Activated naive CD4-positive, alpha-beta T cell treated with anti-CD3 and anti-CD28 coated beads for 36 hours (primary cell): ENCODE measurements at regions of chr6 and their contacts with region 1.

Region 1: GRCh38 chr6:160930547-160931377 is 60.8 kb upstream of the MAP3K4 start:
- DNase-seq: peak; percentile 60
- H3K4me3 Mint-ChIP-seq: no peak overlapping the region
- H3K27ac Mint-ChIP-seq: no peak overlapping the region
- H3K4me1 Mint-ChIP-seq: peaks cover 3% of the 10 kb centered on the region
- H3K27me3 Mint-ChIP-seq: peaks cover 33% of the 10 kb centered on the region

Region 2: DNA sequence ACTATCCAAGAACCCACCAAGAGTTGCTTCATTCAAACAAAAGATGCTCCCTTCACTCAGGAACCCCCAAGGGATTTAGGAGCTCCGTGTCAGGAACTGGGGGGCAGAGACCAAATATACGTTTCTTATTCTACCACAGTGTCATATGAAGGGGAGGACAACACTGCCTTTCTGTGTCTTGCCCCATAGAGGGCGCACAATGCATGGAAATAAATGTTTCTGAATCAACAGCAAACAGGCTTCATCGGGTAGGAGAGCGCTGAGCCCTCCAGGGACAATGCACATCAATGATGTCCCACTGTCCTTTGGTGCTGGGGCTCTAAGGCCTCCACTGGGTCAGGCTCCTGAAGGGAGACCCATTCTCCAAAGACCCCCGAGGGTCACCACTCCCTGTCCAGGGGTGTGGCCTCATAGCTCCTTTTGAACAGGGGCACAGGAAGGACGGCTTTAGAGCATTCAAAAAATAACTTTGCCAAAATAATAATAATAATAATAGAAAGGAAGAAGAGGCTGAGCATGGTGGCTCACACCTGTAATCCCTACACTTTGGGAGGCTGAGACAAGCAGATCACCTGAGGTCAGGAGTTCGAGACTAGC is 197.6 kb before region 1 on chr6:
- CTCF ChIA-PET with region 1: no interaction called
- intact Hi-C with region 1: loop called (anchors 10 kb)
- DNase-seq: peak; percentile 56
- H3K4me3 Mint-ChIP-seq: no peak overlapping the region
- H3K27ac Mint-ChIP-seq: no peak overlapping the region
- H3K4me1 Mint-ChIP-seq: no peaks in the 10 kb centered on the region
- H3K27me3 Mint-ChIP-seq: peaks cover 15% of the 10 kb centered on the region

Region 3: GRCh38 chr6:160871320-160871719 is 59.4 kb before region 1 on chr6:
- CTCF ChIA-PET with region 1: no interaction called
- intact Hi-C with region 1: no loop called
- DNase-seq: no peak
- H3K4me3 Mint-ChIP-seq: no peak overlapping the region
- H3K27ac Mint-ChIP-seq: no peak overlapping the region
- H3K4me1 Mint-ChIP-seq: no peaks in the 10 kb centered on the region
- H3K27me3 Mint-ChIP-seq: peaks cover 8% of the 10 kb centered on the region

Region 4: DNA sequence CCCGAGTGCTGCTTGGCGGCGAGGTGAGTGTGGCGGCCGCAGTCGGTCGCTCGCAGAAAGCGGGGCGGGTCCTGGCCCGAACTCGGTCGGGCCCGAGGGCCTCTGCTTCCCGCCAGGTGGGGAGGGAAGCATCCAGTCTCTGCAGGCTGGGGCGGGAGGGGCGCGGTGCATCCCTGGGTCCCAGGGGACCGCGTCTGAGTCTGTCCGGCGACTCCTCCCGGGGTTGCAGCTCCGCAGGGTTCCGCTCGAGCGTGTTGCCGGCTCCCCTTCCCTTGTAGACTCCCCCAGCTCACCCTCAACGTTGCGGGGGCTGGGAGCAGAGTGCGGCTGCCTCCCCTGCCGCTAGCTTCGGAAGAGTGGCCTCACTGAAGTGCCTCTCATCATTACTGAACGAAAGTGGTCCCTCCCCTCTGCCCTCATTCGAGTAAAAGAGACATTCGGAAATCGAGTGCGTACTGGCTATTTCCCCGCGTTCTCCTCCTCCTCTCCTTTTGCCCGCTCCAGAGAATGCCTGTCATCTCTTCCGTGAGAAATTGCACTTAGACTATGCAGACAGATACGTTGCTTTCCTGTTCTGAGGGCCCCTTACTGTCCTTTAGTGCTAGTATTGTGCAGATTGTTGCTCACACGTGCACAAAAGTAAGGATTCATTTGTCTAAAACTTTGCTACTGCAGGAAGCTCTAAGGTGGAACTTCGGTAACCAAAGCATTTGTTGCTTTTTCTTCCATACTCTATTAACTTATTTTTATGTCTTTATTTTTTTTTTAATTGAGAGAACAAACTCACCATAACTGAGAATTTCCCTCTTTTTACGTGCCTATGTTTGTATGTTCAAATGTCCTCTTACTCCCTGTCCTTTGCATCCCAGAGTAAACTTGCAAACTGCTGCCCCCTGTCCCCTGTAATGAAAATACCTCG is 61.6 kb after region 1 on chr6:
- CTCF ChIA-PET with region 1: interaction called, 7 read pairs
- intact Hi-C with region 1: loop called (anchors 1 kb)
- DNase-seq: peak; percentile 51
- H3K4me3 Mint-ChIP-seq: peak overlapping the region; percentile 87
- H3K27ac Mint-ChIP-seq: peak overlapping the region; percentile 77
- H3K4me1 Mint-ChIP-seq: peaks cover 31% of the 10 kb centered on the region
- H3K27me3 Mint-ChIP-seq: peaks cover 2% of the 10 kb centered on the region

Region 5: DNA sequence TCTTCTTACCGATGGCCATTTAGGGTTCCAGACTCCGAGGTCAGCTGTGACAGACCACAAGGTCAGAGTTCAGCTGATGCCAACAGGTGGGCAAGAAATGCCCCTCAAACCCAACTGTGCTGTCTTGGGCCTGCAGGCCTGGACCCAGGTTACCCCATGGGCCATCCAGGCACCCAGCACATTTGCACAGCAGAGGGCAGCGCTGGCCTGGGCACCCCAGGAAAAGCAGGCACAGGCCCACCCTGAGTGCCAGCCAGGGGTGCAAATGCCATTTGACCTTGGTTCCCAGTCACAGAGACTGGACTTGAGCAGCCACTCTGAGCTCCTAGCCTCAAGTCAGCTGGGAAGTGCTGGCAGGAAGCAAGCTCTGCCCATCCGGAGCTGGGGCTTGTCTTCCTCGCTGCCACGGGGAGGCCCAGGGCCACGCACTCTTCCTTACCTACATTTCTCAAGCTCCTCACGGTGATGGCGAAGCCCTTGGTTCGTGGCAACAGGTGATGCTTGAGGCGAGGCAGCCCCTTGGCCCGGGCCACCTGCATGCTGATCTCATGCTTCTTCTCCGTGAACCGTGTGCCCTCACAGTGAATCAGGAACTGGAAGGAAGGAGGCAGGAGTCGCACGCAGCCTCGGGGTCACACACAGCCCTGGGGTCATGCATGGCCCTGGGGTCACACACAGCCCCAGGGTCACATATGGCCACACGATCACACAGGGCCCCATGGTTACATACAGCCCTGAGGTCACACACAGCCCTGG is 222.3 kb after region 1 on chr6:
- CTCF ChIA-PET with region 1: no interaction called
- intact Hi-C with region 1: loop called (anchors 10 kb)
- DNase-seq: peak; percentile 13
- H3K4me3 Mint-ChIP-seq: no peak overlapping the region
- H3K27ac Mint-ChIP-seq: no peak overlapping the region
- H3K4me1 Mint-ChIP-seq: no peaks in the 10 kb centered on the region
- H3K27me3 Mint-ChIP-seq: no peaks in the 10 kb centered on the region

Region 6: GRCh38 chr6:161200610-161201370 is 270.0 kb after region 1 on chr6:
- CTCF ChIA-PET with region 1: no interaction called
- intact Hi-C with region 1: no loop called
- DNase-seq: no peak
- H3K4me3 Mint-ChIP-seq: no peak overlapping the region
- H3K27ac Mint-ChIP-seq: no peak overlapping the region
- H3K4me1 Mint-ChIP-seq: no peaks in the 10 kb centered on the region
- H3K27me3 Mint-ChIP-seq: peaks cover 4% of the 10 kb centered on the region